ENCODE measurements at regions of chr5 and their contacts with region 1.

Region 1: DNA sequence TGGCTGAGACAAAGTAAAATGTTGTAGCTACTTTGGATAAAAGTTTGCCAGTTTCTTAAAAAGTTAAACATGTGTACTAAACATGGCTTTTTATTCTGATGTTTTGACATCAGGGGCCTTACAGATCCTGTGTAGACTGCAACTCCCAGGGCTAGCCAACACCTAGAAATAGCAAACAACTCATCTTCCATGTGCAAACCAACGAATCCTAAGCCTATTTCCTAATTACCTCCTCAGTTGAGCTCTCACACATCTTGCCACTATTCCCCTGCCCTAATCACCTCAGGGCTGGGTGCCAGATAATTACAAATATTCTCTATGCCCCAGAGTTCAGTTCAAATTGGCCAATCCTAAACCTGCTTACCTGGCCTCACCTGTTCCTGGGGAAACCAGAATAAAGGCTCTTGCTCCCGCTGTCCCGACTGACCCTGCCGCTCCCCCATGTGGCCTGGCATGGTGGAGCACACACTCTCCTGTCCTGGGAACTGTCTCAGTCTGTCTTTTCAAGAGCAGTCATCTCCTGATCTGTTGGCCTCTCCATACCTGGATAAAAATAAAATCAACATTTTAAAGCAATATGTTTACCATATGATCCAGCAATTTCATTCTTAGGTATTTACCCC is 37.1 kb upstream of the FAM169A start:
- DNase-seq: peak in 22 of 35 experiments; percentile 1 to 37 (median 6)
- ATAC-seq: peak in 3 of 4 experiments; percentile 53 to 80 (median 66)
- H3K4me3 ChIP-seq: no peak overlapping the region
- H3K4me3 Mint-ChIP-seq: no peak overlapping the region
- H3K27ac ChIP-seq: no peak overlapping the region
- H3K27ac Mint-ChIP-seq: no peak overlapping the region
- H3K4me1 ChIP-seq: no peaks in the 10 kb centered on the region
- H3K4me1 Mint-ChIP-seq: peaks cover 0 to 5% (median 5%) of the 10 kb centered on the region in 3 donors
- H3K27me3 ChIP-seq: no peaks in the 10 kb centered on the region
- H3K27me3 Mint-ChIP-seq: no peaks in the 10 kb centered on the region

Region 2: GRCh38 chr5:74766849-74767578 is 136.3 kb before region 1 on chr5 and contains the starts of genes GFM2 and NSA2:
- CTCF ChIA-PET with region 1: interaction called in 1 of 2 experiments, 11 read pairs
- POLR2A ChIA-PET with region 1: no interaction called
- DNase-seq: peak; percentile 85 to 96 (median 91)
- ATAC-seq: peak; percentile 91 to 93 (median 92)
- H3K4me3 ChIP-seq: peak within 1 kb of the TSS; percentile 76 to 96
- H3K4me3 Mint-ChIP-seq: peak within 1 kb of the TSS; percentile 99 to 100 (median 99)
- H3K27ac ChIP-seq: peak within 1 kb of the TSS; percentile 54
- H3K27ac Mint-ChIP-seq: peak within 1 kb of the TSS; percentile 94 to 97
- H3K4me1 ChIP-seq: peaks cover 23 to 25% of the 10 kb centered on the region in 2 experiments
- H3K4me1 Mint-ChIP-seq: peaks cover 23 to 53% (median 49%) of the 10 kb centered on the region in 3 donors
- H3K27me3 ChIP-seq: no peaks in the 10 kb centered on the region
- H3K27me3 Mint-ChIP-seq: no peaks in the 10 kb centered on the region
- total RNA-seq, gene GFM2: 13.7 to 21.8 (median 20.3) TPM
- total RNA-seq, gene NSA2: 81.8 to 142 (median 126) TPM

Region 3: DNA sequence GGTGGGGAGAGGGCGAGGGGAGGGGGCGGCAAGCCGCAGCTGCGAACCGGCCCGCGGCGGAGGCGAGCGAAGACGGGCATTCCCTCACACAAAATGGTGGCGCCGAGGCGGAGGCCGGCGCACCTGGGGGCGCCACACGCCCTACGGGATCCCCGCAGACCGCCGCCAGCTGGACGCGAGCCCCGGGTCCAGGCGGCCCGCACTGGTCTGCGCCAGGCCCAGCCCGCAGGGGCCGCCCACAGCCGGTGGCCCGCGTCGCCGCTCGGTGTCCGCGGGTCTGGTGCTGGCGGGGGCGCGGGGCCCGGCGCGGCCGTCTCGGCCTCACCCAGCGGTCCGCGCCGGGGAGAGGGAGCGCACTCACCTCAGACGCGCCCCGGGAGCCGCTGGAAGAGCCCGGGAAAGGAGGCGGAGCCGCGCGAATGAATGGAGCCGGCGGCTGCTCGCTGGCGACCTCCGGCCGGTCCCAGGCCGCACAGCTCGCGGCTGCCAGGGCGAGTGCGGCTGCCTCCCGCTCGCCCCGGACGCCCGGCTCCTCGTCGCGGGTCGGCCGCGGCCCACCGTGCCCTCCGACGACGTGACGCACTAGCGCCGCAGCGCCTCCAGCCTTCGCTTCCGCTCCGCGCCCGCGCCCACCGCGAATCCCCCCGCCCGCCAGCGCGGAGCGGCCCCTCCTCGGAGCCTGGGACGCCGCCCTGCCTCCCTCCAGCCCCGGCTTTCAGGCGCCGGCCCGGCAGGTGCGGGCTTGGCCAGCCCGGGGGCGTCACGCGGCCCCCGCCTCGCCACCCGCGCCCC is 37.3 kb before region 1 on chr5 and contains the start of gene FAM169A:
- CTCF ChIA-PET with region 1: no interaction called
- POLR2A ChIA-PET with region 1: no interaction called
- DNase-seq: peak in 33 of 35 experiments; percentile 20 to 71 (median 47)
- ATAC-seq: peak; percentile 77 to 83 (median 80)
- H3K4me3 ChIP-seq: peak within 1 kb of the TSS; percentile 69 to 90
- H3K4me3 Mint-ChIP-seq: peak within 1 kb of the TSS; percentile 91 to 96 (median 93)
- H3K27ac ChIP-seq: peak within 1 kb of the TSS; percentile 53
- H3K27ac Mint-ChIP-seq: peak within 1 kb of the TSS; percentile 86
- H3K4me1 ChIP-seq: peaks cover 2 to 16% of the 10 kb centered on the region in 2 experiments
- H3K4me1 Mint-ChIP-seq: peaks cover 40 to 43% (median 41%) of the 10 kb centered on the region in 3 donors
- H3K27me3 ChIP-seq: peaks cover 0 to 14% of the 10 kb centered on the region in 2 experiments
- H3K27me3 Mint-ChIP-seq: peaks cover 0 to 13% of the 10 kb centered on the region in 2 donors
- total RNA-seq, gene FAM169A: 12.5 to 15.9 (median 12.6) TPM

Region 4: GRCh38 chr5:74889523-74890105 is 13.7 kb before region 1 on chr5:
- CTCF ChIA-PET with region 1: no interaction called
- POLR2A ChIA-PET with region 1: no interaction called
- DNase-seq: no peak
- ATAC-seq: no peak
- H3K4me3 ChIP-seq: no peak overlapping the region
- H3K4me3 Mint-ChIP-seq: no peak overlapping the region
- H3K27ac ChIP-seq: no peak overlapping the region
- H3K27ac Mint-ChIP-seq: no peak overlapping the region
- H3K4me1 ChIP-seq: peaks cover 0 to 6% of the 10 kb centered on the region in 2 experiments
- H3K4me1 Mint-ChIP-seq: no peaks in the 10 kb centered on the region
- H3K27me3 ChIP-seq: peaks cover 0 to 5% of the 10 kb centered on the region in 2 experiments
- H3K27me3 Mint-ChIP-seq: peaks cover 3 to 11% of the 10 kb centered on the region in 2 donors

Region 5: GRCh38 chr5:74919487-74919886 is 16.2 kb after region 1 on chr5:
- CTCF ChIA-PET with region 1: no interaction called
- POLR2A ChIA-PET with region 1: no interaction called
- DNase-seq: peak in 9 of 35 experiments; percentile 3 to 64 (median 11)
- ATAC-seq: peak in 3 of 4 experiments; percentile 40 to 66 (median 64)
- H3K4me3 ChIP-seq: no peak overlapping the region
- H3K4me3 Mint-ChIP-seq: no peak overlapping the region
- H3K27ac ChIP-seq: no peak overlapping the region
- H3K27ac Mint-ChIP-seq: no peak overlapping the region
- H3K4me1 ChIP-seq: no peaks in the 10 kb centered on the region
- H3K4me1 Mint-ChIP-seq: no peaks in the 10 kb centered on the region
- H3K27me3 ChIP-seq: no peaks in the 10 kb centered on the region
- H3K27me3 Mint-ChIP-seq: peaks cover 2 to 3% of the 10 kb centered on the region in 2 donors